Activated CD4-positive, alpha-beta memory T cell treated with anti-CD3 and anti-CD28 coated beads for 36 hours (primary cell): ENCODE measurements at regions of chr4 and their contacts with region 1.

Region 1: DNA sequence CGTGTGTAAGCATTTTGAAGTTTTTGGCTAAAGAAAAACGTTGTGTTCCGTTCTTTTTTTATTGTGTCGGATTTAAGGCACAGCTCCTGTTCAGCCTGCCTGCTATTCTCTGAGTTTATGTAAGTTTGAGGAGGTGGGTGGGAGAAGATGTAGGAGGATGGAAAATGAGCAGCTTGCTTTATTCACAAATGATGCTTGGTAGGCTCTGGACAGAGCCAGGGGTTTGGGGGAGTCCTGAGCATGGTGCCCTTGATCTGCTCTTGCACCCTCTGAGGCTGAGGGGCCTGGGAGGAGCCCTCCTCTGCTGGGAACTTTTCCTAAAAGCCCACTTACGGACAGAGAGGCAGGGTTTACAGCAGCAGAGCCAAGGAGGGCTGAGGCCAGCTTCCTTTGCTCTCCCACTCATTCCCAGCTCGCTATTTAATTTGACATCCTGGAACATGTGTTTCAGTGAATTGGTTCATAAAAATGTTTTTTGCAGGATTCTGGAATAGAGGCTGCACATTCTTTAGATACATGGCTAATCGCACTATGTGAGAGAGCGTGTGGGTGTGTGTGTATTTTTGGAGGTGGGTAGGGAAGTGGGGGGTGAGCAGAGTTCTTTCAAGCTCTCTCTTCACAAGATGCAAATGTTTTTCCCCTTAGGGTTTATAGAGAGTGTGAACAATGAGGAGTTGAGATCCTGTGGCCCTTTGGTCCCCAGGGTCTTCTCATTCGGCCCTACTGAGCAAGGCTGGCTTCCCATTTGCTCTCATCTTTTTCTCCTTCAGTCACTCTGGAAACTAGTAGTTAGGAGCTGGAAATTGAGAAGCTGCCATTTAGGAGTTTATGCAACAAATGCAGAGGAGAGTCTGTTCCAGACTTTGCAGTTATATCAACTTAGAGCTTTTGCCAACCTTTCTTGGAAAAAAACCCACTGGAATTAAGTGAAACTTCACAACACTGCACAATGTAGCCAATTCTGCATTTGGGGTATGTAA is 32.1 kb downstream of the TMEM131L start:
- DNase-seq: no peak
- H3K4me3 Mint-ChIP-seq: peak overlapping the region; percentile 67
- H3K27ac Mint-ChIP-seq: peak overlapping the region; percentile 98
- H3K4me1 Mint-ChIP-seq: peaks cover 94% of the 10 kb centered on the region
- H3K27me3 Mint-ChIP-seq: no peaks in the 10 kb centered on the region

Region 2: DNA sequence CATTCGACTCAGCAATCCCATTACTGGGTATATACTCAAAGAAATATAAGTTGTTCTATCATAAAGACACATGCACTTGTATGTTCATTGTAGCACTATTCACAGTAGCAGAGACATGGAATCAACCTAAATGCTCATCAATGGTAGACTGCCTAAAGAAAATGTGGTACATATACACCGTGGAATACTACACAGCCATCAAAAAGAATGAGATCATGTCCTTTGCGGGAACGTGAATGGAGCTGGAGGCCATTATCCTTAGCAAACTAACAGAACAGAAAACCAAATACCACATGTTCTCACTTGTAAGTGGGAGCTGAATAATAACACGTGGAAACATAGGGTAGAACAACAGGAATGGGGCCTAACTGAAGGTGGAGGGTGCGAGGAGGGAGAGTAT is 12.8 kb after region 1 on chr4:
- CTCF ChIA-PET with region 1: no interaction called
- POLR2A ChIA-PET with region 1: no interaction called
- intact Hi-C with region 1: no loop called
- DNase-seq: no peak
- H3K4me3 Mint-ChIP-seq: no peak overlapping the region
- H3K27ac Mint-ChIP-seq: no peak overlapping the region
- H3K4me1 Mint-ChIP-seq: peaks cover 67% of the 10 kb centered on the region
- H3K27me3 Mint-ChIP-seq: no peaks in the 10 kb centered on the region

Region 3: GRCh38 chr4:153521999-153522801 is 23.9 kb after region 1 on chr4:
- CTCF ChIA-PET with region 1: interaction called, 4 read pairs
- POLR2A ChIA-PET with region 1: interaction called, 18 read pairs
- intact Hi-C with region 1: loop called (anchors 1 kb)
- DNase-seq: peak; percentile 80
- H3K4me3 Mint-ChIP-seq: peak overlapping the region; percentile 67
- H3K27ac Mint-ChIP-seq: peak overlapping the region; percentile 96
- H3K4me1 Mint-ChIP-seq: peaks cover 91% of the 10 kb centered on the region
- H3K27me3 Mint-ChIP-seq: no peaks in the 10 kb centered on the region